Activated B cell treated with CpG ODN at 0.5 μM for 24 hours (primary cell): ENCODE measurements at regions of chr20 and their contacts with region 1.

Region 1: GRCh38 chr20:32207626-32208498 is at the starts of genes PLAGL2 and POFUT1:
- DNase-seq: peak; percentile 92
- ATAC-seq: peak; percentile 97
- H3K4me3 Mint-ChIP-seq: peak within 1 kb of the TSS; percentile 91
- H3K27ac Mint-ChIP-seq: peak within 1 kb of the TSS; percentile 85
- H3K4me1 Mint-ChIP-seq: peaks cover 62% of the 10 kb centered on the region
- H3K27me3 Mint-ChIP-seq: no peaks in the 10 kb centered on the region
- CTCF ChIP-seq: no peak
- total RNA-seq, gene PLAGL2: 17.3 and 17.9 TPM in 2 replicates
- total RNA-seq, gene POFUT1: 20.4 and 24.0 TPM in 2 replicates

Region 2: GRCh38 chr20:32277361-32278198 is 69.7 kb after region 1 on chr20 and contains the start of gene KIF3B:
- CTCF ChIA-PET with region 1: no interaction called
- POLR2A ChIA-PET with region 1: interaction called, 3 read pairs
- intact Hi-C with region 1: loop called (anchors 1 kb)
- DNase-seq: peak; percentile 80
- ATAC-seq: peak; percentile 68
- H3K4me3 Mint-ChIP-seq: peak within 1 kb of the TSS; percentile 92
- H3K27ac Mint-ChIP-seq: peak within 1 kb of the TSS; percentile 94
- H3K4me1 Mint-ChIP-seq: peaks cover 56% of the 10 kb centered on the region
- H3K27me3 Mint-ChIP-seq: peaks cover 3% of the 10 kb centered on the region
- CTCF ChIP-seq: no peak
- total RNA-seq, gene KIF3B: 25.9 and 28.4 TPM in 2 replicates

Region 3: GRCh38 chr20:32638848-32639247 is 431.0 kb after region 1 on chr20:
- CTCF ChIA-PET with region 1: no interaction called
- POLR2A ChIA-PET with region 1: no interaction called
- intact Hi-C with region 1: no loop called
- DNase-seq: no peak
- ATAC-seq: no peak
- H3K4me3 Mint-ChIP-seq: no peak overlapping the region
- H3K27ac Mint-ChIP-seq: no peak overlapping the region
- H3K4me1 Mint-ChIP-seq: no peaks in the 10 kb centered on the region
- H3K27me3 Mint-ChIP-seq: peaks cover 5% of the 10 kb centered on the region
- CTCF ChIP-seq: no peak